ENCODE measurements at regions of chr12 and their contacts with region 1.

Region 1: GRCh38 chr12:122659519-122659918 is 43.6 kb downstream of the HCAR2 start:
- DNase-seq: no peak
- H3K4me3 ChIP-seq: no peak overlapping the region
- H3K27ac ChIP-seq: no peak overlapping the region
- H3K4me1 ChIP-seq: no peaks in the 10 kb centered on the region
- H3K27me3 ChIP-seq: no peaks in the 10 kb centered on the region
- CTCF ChIP-seq: no peak
- EP300 ChIP-seq: no peak
- POLR2A ChIP-seq: no peak
- RAD21 ChIP-seq: no peak

Region 2: DNA sequence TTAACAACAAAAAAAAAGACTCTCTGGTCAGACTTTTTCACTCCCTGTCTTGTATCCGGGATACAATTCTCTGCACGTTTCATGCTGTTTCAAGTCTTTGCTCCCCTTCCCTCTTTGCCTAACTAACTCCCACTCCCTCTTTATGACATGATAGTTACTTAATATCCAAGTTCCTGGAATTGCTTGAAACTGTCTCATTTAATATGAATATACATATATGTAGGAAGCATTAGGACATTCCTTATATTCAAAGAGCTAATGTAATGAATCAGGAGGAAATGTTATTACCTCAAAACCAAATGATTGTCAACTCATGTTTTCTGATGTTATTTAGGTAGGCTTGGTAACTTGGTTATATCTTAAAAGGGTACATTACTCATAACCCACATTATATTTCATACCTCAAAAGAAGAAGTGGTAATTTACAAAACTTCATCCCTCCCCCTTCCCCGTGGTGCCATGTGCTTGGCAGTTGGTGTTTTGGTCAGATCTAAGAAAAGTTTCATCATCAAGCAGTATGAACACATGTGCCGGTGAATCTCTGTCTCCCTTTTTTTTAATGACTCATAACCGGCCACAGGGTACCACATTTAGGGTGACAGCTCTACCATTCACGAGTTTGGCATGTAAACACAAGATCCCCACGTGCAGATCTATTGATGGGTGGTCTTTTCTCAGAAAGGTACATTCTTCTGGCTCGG is 12.9 kb before region 1 on chr12:
- CTCF ChIA-PET with region 1: interaction called, 16 read pairs
- POLR2A ChIA-PET with region 1: interaction called, 3 read pairs
- DNase-seq: no peak
- H3K4me3 ChIP-seq: no peak overlapping the region
- H3K27ac ChIP-seq: no peak overlapping the region
- H3K4me1 ChIP-seq: peaks cover 0 to 7% (median 0%) of the 10 kb centered on the region in 4 experiments; a peak in 4 of 7 replicates
- H3K27me3 ChIP-seq: no peaks in the 10 kb centered on the region
- CTCF ChIP-seq: no peak
- EP300 ChIP-seq: no peak
- POLR2A ChIP-seq: no peak
- RAD21 ChIP-seq: no peak

Region 3: GRCh38 chr12:122672515-122672914 is 13.0 kb after region 1 on chr12:
- CTCF ChIA-PET with region 1: interaction called, 20 read pairs
- POLR2A ChIA-PET with region 1: interaction called, 4 read pairs
- DNase-seq: no peak
- H3K4me3 ChIP-seq: no peak overlapping the region
- H3K27ac ChIP-seq: no peak overlapping the region
- H3K4me1 ChIP-seq: no peaks in the 10 kb centered on the region; a peak in 1 of 7 replicates
- H3K27me3 ChIP-seq: no peaks in the 10 kb centered on the region
- CTCF ChIP-seq: no peak
- EP300 ChIP-seq: no peak
- POLR2A ChIP-seq: no peak
- RAD21 ChIP-seq: no peak